Left colon (tissue), 2 donors: ENCODE measurements at regions of chr11 and their contacts with region 1.

Region 1: GRCh38 chr11:83736689-83737088 is 450.5 kb upstream of the CCDC90B start:
- DNase-seq: no peak
- ATAC-seq: no peak

Region 2: GRCh38 chr11:82671451-82671850 is 1065.2 kb before region 1 on chr11:
- intact Hi-C with region 1: loop called in 1 of 2 experiments (anchors 5 kb)
- DNase-seq: no peak
- ATAC-seq: no peak

Region 3: DNA sequence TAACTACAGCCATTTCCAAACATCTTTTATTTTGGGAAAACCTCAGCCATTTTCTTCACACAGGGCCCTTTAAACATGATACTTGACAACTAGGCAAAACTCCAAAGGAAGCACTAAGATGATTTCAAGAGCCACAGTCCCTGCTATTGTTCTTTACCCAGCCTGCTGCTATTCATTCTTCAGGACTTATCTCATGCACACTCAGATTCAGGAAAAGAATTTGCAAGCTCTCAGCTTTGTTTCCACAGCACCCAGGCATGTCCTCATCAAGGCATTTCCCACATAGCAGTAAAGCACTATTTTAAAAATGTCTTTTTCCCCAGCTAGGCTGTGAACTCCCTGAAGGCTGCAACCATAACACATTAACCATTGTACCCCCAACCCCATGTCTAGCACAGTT is 158.8 kb after region 1 on chr11:
- intact Hi-C with region 1: no loop called
- DNase-seq: no peak
- ATAC-seq: no peak

Region 4: GRCh38 chr11:83956110-83956697 is 219.5 kb after region 1 on chr11:
- intact Hi-C with region 1: no loop called
- DNase-seq: no peak
- ATAC-seq: no peak